ENCODE measurements at regions of chr6 and their contacts with region 1.

Region 1: GRCh38 chr6:42726485-42727086 is 4.2 kb upstream of the PRPH2 start:
- DNase-seq: peak; percentile 83 to 86
- H3K4me3 ChIP-seq: peak overlapping the region; percentile 2 to 24 (median 22)
- H3K27ac ChIP-seq: peak overlapping the region; percentile 73 to 88 (median 78)
- H3K4me1 ChIP-seq: peaks cover 6 to 13% of the 10 kb centered on the region in 2 donors
- H3K27me3 ChIP-seq: no peaks in the 10 kb centered on the region
- CTCF ChIP-seq: peak; percentile 76 to 99 (median 94)
- POLR2A ChIP-seq: no peak

Region 2: GRCh38 chr6:42661540-42662153 is 64.9 kb before region 1 on chr6:
- intact Hi-C with region 1: loop called (anchors 2 kb)
- DNase-seq: peak; percentile 84 to 89
- H3K4me3 ChIP-seq: no peak overlapping the region
- H3K27ac ChIP-seq: peak overlapping the region in 1 of 3 donors; percentile 29
- H3K4me1 ChIP-seq: peaks cover 0 to 4% of the 10 kb centered on the region in 2 donors
- H3K27me3 ChIP-seq: no peaks in the 10 kb centered on the region
- CTCF ChIP-seq: peak; percentile 51 to 97 (median 88)
- POLR2A ChIP-seq: no peak

Region 3: GRCh38 chr6:42696526-42697267 is 29.9 kb before region 1 on chr6:
- intact Hi-C with region 1: loop called (anchors 5 kb)
- DNase-seq: peak; percentile 64 to 73
- H3K4me3 ChIP-seq: no peak overlapping the region
- H3K27ac ChIP-seq: peak overlapping the region; percentile 61 to 82 (median 72)
- H3K4me1 ChIP-seq: peaks cover 50 to 58% of the 10 kb centered on the region in 2 donors
- H3K27me3 ChIP-seq: no peaks in the 10 kb centered on the region
- CTCF ChIP-seq: no peak
- POLR2A ChIP-seq: no peak

Region 4: GRCh38 chr6:42879372-42880239 is 153.0 kb after region 1 on chr6 and contains the start of gene RPL7L1:
- intact Hi-C with region 1: loop called (anchors 10 kb)
- DNase-seq: peak; percentile 83 to 86
- H3K4me3 ChIP-seq: peak within 1 kb of the TSS; percentile 24 to 91 (median 47)
- H3K27ac ChIP-seq: peak within 1 kb of the TSS; percentile 94 to 97 (median 96)
- H3K4me1 ChIP-seq: peaks cover 6 to 21% of the 10 kb centered on the region in 2 donors
- H3K27me3 ChIP-seq: no peaks in the 10 kb centered on the region
- CTCF ChIP-seq: peak in 3 of 6 experiments; percentile 21 to 33 (median 23)
- POLR2A ChIP-seq: peak; percentile 1 to 72
- total RNA-seq, gene RPL7L1: 99.1 to 121 (median 103) TPM

Measured in thyroid gland (tissue), 4 donors.